CD4-positive, alpha-beta memory T cell (primary cell): ENCODE measurements at regions of chr10 and their contacts with region 1.

Region 1: DNA sequence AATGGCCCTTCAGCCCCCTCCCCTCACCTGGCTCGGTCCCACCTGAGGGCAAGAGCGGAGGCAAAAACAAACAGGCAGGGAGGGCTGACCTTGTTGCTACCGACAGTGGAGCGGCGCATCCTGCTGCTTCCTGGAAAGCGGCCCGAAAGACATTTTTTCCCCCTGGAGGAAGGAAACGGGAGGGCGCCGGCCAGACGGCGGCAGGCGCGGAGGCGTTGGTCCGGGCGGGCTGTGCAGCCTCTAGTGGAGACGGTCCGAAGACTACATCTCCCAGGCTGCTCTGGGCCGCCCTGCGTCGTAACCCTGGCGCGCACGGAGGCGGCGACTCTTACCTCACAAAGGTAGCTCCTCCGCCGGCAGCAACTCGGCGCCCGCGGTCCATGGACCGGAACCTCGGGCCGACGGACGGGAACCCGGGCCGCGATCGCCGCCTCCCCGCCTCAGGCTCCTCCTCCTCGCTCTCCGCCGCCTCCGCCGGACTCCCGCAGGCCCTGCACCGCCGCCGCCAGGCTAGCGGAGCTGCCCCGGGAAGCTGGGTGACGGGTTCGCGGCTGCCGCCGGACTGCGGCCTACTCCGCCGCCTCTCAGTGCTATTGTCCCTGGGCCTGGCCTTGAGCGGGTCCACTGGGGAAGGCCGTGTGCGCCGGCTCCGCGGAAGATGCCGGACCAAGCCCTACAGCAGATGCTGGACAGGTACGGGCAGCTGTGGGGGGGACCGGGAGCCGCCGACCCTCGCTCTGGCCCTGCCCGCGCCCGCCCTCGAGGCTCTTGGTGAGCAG is at the starts of genes CPEB3 and MARCHF5:
- DNase-seq: peak; percentile 87 to 94 (median 89)
- H3K4me3 ChIP-seq: peak within 1 kb of the TSS; percentile 85 to 87
- H3K4me3 Mint-ChIP-seq: peak within 1 kb of the TSS; percentile 89 to 98 (median 96)
- H3K27ac ChIP-seq: peak within 1 kb of the TSS; percentile 90
- H3K27ac Mint-ChIP-seq: peak within 1 kb of the TSS; percentile 86 to 94 (median 91)
- H3K4me1 ChIP-seq: peaks cover 26% of the 10 kb centered on the region
- H3K4me1 Mint-ChIP-seq: peaks cover 18 to 39% (median 29%) of the 10 kb centered on the region in 4 donors
- H3K27me3 ChIP-seq: no peaks in the 10 kb centered on the region
- H3K27me3 Mint-ChIP-seq: no peaks in the 10 kb centered on the region
- total RNA-seq, gene CPEB3: 3.4 to 3.8 TPM
- total RNA-seq, gene MARCHF5: 38.6 to 40.8 TPM

Region 2: DNA sequence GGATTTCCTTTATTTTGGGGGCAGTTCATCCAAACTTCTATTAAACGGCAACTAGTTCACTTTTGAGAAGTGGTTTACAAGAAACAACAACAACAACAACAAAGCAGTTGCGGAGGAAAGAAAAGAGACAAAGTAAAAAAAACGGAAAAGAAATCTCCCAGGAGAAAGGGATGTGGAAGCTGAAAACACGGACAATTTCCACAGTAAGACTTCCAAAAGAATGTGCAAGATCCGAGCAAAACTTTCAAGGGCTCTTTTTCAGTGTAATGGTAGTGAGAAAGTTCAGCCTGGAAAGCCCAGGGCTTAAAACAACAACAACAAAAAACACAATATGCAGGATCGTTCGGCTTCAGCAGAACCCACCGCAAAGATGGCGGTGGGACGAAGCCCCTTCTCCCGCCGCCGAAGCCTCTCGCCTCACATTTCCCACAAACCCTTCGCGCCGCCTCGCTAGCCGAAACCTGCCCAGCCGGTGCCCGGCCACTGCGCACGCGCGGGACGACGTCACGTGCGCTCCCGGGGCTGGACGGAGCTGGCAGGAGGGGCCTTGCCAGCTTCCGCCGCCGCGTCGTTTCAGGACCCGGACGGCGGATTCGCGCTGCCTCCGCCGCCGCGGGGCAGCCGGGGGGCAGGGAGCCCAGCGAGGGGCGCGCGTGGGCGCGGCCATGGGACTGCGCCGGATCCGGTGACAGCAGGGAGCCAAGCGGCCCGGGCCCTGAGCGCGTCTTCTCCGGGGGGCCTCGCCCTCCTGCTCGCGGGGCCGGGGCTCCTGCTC is 493.0 kb before region 1 on chr10 and contains the start of gene TNKS2:
- CTCF ChIA-PET with region 1: no interaction called
- POLR2A ChIA-PET with region 1: no interaction called
- intact Hi-C with region 1: loop called (anchors 2 kb)
- DNase-seq: peak; percentile 88 to 93 (median 92)
- H3K4me3 ChIP-seq: peak within 1 kb of the TSS; percentile 83
- H3K4me3 Mint-ChIP-seq: peak within 1 kb of the TSS; percentile 91 to 99 (median 99)
- H3K27ac ChIP-seq: peak within 1 kb of the TSS; percentile 90
- H3K27ac Mint-ChIP-seq: peak within 1 kb of the TSS; percentile 92 to 100 (median 98)
- H3K4me1 ChIP-seq: peaks cover 53% of the 10 kb centered on the region
- H3K4me1 Mint-ChIP-seq: peaks cover 50 to 72% (median 62%) of the 10 kb centered on the region in 4 donors
- H3K27me3 ChIP-seq: no peaks in the 10 kb centered on the region
- H3K27me3 Mint-ChIP-seq: no peaks in the 10 kb centered on the region
- total RNA-seq, gene TNKS2: 65.5 to 70.0 TPM

Region 3: DNA sequence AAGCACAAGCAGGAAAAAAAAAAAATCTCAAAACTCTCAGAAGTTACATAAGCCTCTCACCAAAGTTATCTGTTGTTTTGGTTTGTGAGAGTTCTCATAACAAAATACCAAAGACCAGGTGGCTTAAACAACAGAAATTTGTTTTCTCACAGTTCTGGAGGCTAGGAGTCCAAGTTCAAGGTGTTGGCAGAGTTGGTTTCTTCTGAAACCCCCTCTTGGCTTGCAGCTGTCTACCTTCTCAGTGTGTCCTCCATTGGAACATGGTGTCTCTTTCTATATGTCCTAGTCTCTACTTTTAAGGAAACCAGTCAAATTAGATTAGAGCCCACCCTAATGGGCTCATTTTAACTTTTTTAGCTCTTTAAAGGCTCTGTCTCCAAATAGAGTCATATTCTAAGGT is 447.9 kb before region 1 on chr10:
- CTCF ChIA-PET with region 1: no interaction called
- POLR2A ChIA-PET with region 1: no interaction called
- intact Hi-C with region 1: no loop called
- DNase-seq: no peak
- H3K4me3 ChIP-seq: no peak overlapping the region
- H3K4me3 Mint-ChIP-seq: no peak overlapping the region
- H3K27ac ChIP-seq: no peak overlapping the region
- H3K27ac Mint-ChIP-seq: no peak overlapping the region
- H3K4me1 ChIP-seq: no peaks in the 10 kb centered on the region
- H3K4me1 Mint-ChIP-seq: no peaks in the 10 kb centered on the region
- H3K27me3 ChIP-seq: no peaks in the 10 kb centered on the region
- H3K27me3 Mint-ChIP-seq: no peaks in the 10 kb centered on the region

Region 4: DNA sequence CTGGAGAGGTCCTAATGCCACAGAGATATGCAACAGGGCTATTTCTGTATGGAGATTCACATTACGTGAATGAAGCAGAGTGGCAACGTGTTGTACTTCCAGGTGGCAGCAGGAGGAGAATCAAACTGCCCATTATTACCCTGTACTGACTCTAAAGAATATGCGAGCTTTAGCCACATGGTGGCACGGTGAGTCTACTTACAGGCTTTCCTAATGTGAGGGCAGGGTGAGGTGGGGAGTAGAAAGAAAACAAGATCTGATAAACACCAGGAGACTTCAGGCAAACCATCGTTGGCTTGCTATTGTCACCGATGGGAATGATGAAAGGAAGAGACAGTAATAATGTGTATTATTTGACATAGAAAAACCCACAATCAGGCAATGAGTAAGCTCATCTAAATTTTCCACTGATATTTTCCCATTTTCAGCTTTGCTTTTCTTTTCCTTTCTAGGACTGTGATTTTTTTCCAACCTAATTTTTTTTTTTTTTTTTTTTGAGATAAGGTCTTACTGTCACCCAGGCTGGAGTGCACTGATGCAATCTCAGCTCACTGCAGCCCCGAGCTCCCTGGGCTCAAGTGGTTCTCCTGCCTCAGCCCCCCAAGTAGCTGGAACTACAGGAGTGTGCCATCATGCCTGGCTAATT is 203.2 kb before region 1 on chr10:
- CTCF ChIA-PET with region 1: interaction called, 15 read pairs
- POLR2A ChIA-PET with region 1: interaction called, 7 read pairs
- intact Hi-C with region 1: loop called (anchors 1 kb)
- DNase-seq: peak; percentile 43 to 60 (median 51)
- H3K4me3 ChIP-seq: no peak overlapping the region
- H3K4me3 Mint-ChIP-seq: no peak overlapping the region
- H3K27ac ChIP-seq: no peak overlapping the region
- H3K27ac Mint-ChIP-seq: peak overlapping the region in 1 of 7 donors; percentile 22
- H3K4me1 ChIP-seq: no peaks in the 10 kb centered on the region
- H3K4me1 Mint-ChIP-seq: peaks cover 0 to 6% (median 3%) of the 10 kb centered on the region in 4 donors
- H3K27me3 ChIP-seq: no peaks in the 10 kb centered on the region
- H3K27me3 Mint-ChIP-seq: no peaks in the 10 kb centered on the region

Region 5: GRCh38 chr10:92240289-92241157 is 50.5 kb before region 1 on chr10:
- CTCF ChIA-PET with region 1: interaction called, 8 read pairs
- POLR2A ChIA-PET with region 1: interaction called, 38 read pairs
- intact Hi-C with region 1: loop called (anchors 1 kb)
- DNase-seq: peak; percentile 39 to 49 (median 48)
- H3K4me3 ChIP-seq: peak overlapping the region; percentile 37 to 78
- H3K4me3 Mint-ChIP-seq: peak overlapping the region; percentile 90 to 96 (median 93)
- H3K27ac ChIP-seq: peak overlapping the region; percentile 56
- H3K27ac Mint-ChIP-seq: peak overlapping the region; percentile 42 to 92 (median 81)
- H3K4me1 ChIP-seq: peaks cover 37% of the 10 kb centered on the region
- H3K4me1 Mint-ChIP-seq: peaks cover 24 to 52% (median 38%) of the 10 kb centered on the region in 4 donors
- H3K27me3 ChIP-seq: no peaks in the 10 kb centered on the region
- H3K27me3 Mint-ChIP-seq: no peaks in the 10 kb centered on the region

Region 6: DNA sequence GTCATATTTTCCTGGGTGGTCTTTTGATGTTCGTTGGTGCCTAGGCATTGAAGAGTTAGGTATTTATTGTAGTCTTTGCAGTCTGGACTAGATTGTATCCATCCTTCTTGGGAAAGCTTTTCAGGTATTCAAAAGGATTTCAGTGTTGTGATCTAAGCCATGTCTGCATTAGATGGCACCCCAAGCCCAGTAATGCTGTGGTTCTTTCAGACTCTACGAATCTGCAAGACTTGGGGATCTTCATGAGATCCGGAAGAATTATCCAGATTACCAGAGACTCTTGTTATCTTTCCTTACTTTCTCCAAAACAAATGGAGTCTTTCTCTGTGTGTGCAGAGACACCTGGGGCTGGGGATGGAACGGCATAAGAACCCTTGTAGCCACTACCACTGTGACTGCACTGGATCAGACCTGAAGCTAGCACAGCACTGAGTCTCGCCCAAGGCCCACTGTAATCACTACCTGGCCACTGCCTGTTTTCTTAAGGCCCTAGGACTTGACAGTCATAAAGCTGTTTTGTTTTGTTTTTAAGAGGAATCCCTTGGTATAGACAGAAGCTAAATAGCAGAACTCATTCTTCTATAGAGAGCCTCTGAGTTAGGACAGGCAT is 75.5 kb after region 1 on chr10:
- CTCF ChIA-PET with region 1: no interaction called
- POLR2A ChIA-PET with region 1: no interaction called
- intact Hi-C with region 1: no loop called
- DNase-seq: no peak
- H3K4me3 ChIP-seq: no peak overlapping the region
- H3K4me3 Mint-ChIP-seq: no peak overlapping the region
- H3K27ac ChIP-seq: no peak overlapping the region
- H3K27ac Mint-ChIP-seq: no peak overlapping the region
- H3K4me1 ChIP-seq: no peaks in the 10 kb centered on the region
- H3K4me1 Mint-ChIP-seq: no peaks in the 10 kb centered on the region
- H3K27me3 ChIP-seq: no peaks in the 10 kb centered on the region
- H3K27me3 Mint-ChIP-seq: peaks cover 17 to 23% of the 10 kb centered on the region in 2 donors

Region 7: GRCh38 chr10:92562424-92562823 is 271.4 kb after region 1 on chr10:
- CTCF ChIA-PET with region 1: no interaction called
- POLR2A ChIA-PET with region 1: no interaction called
- intact Hi-C with region 1: no loop called
- DNase-seq: no peak
- H3K4me3 ChIP-seq: no peak overlapping the region
- H3K4me3 Mint-ChIP-seq: no peak overlapping the region
- H3K27ac ChIP-seq: no peak overlapping the region
- H3K27ac Mint-ChIP-seq: peak overlapping the region in 1 of 7 donors; percentile 14
- H3K4me1 ChIP-seq: peaks cover 5% of the 10 kb centered on the region
- H3K4me1 Mint-ChIP-seq: peaks cover 26 to 33% (median 29%) of the 10 kb centered on the region in 4 donors
- H3K27me3 ChIP-seq: no peaks in the 10 kb centered on the region
- H3K27me3 Mint-ChIP-seq: no peaks in the 10 kb centered on the region

Region 8: GRCh38 chr10:92592761-92593618 is 302.0 kb after region 1 on chr10 and contains the start of gene KIF11:
- CTCF ChIA-PET with region 1: no interaction called
- POLR2A ChIA-PET with region 1: interaction called, 17 read pairs
- intact Hi-C with region 1: loop called (anchors 1 kb)
- DNase-seq: peak; percentile 93 to 97 (median 93)
- H3K4me3 ChIP-seq: peak within 1 kb of the TSS; percentile 65 to 76
- H3K4me3 Mint-ChIP-seq: peak within 1 kb of the TSS; percentile 93 to 99 (median 98)
- H3K27ac ChIP-seq: peak within 1 kb of the TSS; percentile 85
- H3K27ac Mint-ChIP-seq: peak within 1 kb of the TSS; percentile 99 to 100 (median 100)
- H3K4me1 ChIP-seq: peaks cover 49% of the 10 kb centered on the region
- H3K4me1 Mint-ChIP-seq: peaks cover 27 to 63% (median 36%) of the 10 kb centered on the region in 4 donors
- H3K27me3 ChIP-seq: no peaks in the 10 kb centered on the region
- H3K27me3 Mint-ChIP-seq: no peaks in the 10 kb centered on the region
- total RNA-seq, gene KIF11: 2.0 to 2.1 TPM